B cell (primary cell): ENCODE measurements at regions of chr1 and their contacts with region 1.

Region 1: DNA sequence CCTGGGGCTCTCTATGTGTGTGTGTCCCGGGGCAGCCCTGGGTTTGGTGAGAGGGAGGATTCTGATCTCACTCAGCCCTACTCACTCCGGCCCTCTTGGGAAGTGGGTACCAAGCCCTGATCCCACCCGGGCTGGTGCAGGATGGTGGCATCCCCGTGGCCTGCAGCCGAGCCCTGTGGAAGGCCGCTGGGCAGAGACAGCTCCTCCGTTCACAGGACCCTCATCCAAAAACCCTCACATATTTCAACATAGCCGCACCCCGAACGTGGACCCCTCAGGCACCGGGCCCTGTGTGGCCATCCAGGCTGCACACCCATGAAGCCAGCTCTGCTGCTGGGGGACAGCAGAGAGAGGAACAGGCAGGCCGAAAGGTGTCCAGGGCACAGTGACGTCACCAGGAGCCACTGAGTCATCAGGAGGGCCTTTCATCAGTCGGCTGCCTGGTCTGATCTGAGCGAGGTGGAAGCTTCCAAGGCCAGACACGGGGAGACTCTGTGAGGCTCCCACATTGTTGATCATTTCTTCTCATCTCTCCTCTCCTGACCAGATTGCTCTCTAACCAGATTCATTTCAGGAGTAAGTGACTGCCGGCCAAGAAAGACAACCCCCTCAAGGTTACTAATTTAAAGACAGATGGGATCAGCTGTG is 16.2 kb upstream of the GPR157 start:
- DNase-seq: no peak
- ATAC-seq: no peak
- H3K4me3 ChIP-seq: no peak overlapping the region
- H3K4me3 Mint-ChIP-seq: no peak overlapping the region
- H3K27ac ChIP-seq: no peak overlapping the region
- H3K27ac Mint-ChIP-seq: no peak overlapping the region
- H3K4me1 ChIP-seq: no peaks in the 10 kb centered on the region
- H3K4me1 Mint-ChIP-seq: peaks cover 3% of the 10 kb centered on the region
- H3K27me3 ChIP-seq: no peaks in the 10 kb centered on the region
- H3K27me3 Mint-ChIP-seq: no peaks in the 10 kb centered on the region
- CTCF ChIP-seq: no peak

Region 2: GRCh38 chr1:9181176-9181906 is 36.2 kb after region 1 on chr1:
- CTCF ChIA-PET with region 1: interaction called, 10 read pairs
- POLR2A ChIA-PET with region 1: no interaction called
- intact Hi-C with region 1: no loop called
- DNase-seq: peak; percentile 75
- ATAC-seq: peak; percentile 62
- H3K4me3 ChIP-seq: peak overlapping the region in 4 of 5 experiments; percentile 15 to 50 (median 44)
- H3K4me3 Mint-ChIP-seq: peak overlapping the region; percentile 82
- H3K27ac ChIP-seq: no peak overlapping the region
- H3K27ac Mint-ChIP-seq: no peak overlapping the region
- H3K4me1 ChIP-seq: peaks cover 17 to 25% of the 10 kb centered on the region in 2 donors
- H3K4me1 Mint-ChIP-seq: peaks cover 18% of the 10 kb centered on the region
- H3K27me3 ChIP-seq: peaks cover 0 to 42% (median 12%) of the 10 kb centered on the region in 4 experiments
- H3K27me3 Mint-ChIP-seq: peaks cover 28% of the 10 kb centered on the region
- CTCF ChIP-seq: peak; percentile 95

Region 3: DNA sequence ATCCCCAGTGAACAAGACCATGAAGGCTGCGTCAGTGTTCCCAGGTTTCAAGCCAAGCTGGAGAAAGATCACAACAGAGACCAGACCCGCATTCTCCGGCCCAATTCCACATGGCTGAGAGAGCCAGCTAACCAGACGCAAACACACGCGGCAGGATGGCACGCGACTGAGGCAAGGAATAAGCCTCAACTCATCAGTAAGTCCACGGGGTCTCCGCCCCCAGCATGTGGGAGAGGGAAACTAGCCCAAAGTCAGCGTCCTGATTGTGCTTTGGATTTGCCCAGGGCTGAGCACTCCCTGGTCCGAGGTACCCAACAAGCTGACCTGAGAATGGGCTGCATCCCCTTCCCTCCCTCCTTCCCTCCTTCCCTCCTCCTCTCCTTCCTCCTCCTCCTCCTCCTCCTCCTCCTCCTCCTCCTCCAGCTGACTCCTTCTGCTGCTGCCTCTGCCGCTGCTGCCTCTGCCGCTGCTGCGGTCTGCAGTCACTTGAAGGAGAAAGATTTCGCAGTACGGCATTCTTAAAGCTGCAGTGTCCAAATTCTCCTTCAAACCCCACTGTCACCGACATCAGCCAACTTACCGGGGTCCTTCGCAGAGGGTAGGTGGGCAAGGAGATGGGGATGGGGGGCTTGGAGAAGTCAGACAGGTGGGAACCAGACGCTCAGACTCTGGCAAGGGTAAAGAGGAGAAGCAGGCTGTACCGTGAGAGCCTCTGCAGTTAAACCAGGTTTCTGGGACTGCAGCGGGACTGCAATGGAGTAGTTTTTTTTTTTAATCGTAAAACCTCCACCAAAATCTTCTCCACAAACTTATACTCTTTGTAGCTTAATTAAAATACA is 56.5 kb after region 1 on chr1:
- CTCF ChIA-PET with region 1: interaction called, 46 read pairs
- POLR2A ChIA-PET with region 1: no interaction called
- intact Hi-C with region 1: loop called (anchors 1 kb)
- DNase-seq: no peak
- ATAC-seq: no peak
- H3K4me3 ChIP-seq: no peak overlapping the region
- H3K4me3 Mint-ChIP-seq: peak overlapping the region; percentile 21
- H3K27ac ChIP-seq: no peak overlapping the region
- H3K27ac Mint-ChIP-seq: no peak overlapping the region
- H3K4me1 ChIP-seq: peaks cover 19 to 22% of the 10 kb centered on the region in 2 donors
- H3K4me1 Mint-ChIP-seq: peaks cover 32% of the 10 kb centered on the region
- H3K27me3 ChIP-seq: peaks cover 0 to 77% (median 50%) of the 10 kb centered on the region in 4 experiments
- H3K27me3 Mint-ChIP-seq: peaks cover 72% of the 10 kb centered on the region
- CTCF ChIP-seq: no peak

Region 4: DNA sequence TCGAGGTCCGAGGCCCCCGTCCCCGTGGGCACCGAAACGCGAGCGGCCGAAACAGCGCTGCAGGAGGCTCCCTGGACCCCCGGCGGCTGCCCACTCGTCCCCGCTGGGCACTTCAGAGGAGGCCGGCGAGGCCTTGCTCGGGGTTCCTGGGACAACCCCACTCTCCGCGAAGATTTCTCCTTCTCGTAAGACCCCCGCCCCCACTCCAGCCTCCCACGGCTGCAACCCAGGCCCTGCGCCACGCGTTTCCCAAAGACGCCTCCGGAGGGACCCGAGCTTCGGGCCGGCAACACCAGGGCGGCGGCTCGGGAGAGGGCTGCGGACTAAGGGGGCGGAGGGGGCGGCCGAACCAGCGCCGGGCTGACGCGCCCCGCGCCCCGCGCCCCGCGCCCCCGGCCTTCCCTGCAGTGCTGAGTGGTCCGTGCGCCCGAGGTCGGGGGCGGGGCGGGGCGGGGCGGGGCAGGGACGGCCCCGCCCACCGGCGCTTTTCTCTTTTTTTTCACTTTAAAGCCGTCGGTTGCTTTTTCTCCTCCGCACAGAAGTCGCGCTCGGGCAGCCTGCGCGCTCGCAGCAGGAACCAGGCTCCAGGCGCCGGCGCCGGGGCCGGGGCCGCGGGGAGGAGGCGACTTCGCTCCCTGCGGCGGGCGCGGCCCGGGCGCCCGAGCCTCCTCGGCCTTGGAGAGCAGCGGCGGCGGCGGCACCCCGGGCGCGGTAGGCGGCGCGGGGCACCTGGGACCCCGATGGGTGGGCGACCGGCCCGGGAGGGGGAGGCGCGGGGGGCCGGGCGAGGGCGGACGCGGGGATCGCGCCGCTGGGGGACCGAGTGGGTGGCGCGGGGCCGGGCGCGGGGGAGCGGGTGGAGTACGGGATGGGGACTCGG is 147.5 kb after region 1 on chr1 and contains the start of gene SPSB1:
- CTCF ChIA-PET with region 1: no interaction called
- POLR2A ChIA-PET with region 1: no interaction called
- intact Hi-C with region 1: no loop called
- DNase-seq: peak; percentile 86
- ATAC-seq: peak; percentile 68
- H3K4me3 ChIP-seq: peak within 1 kb of the TSS; percentile 41 to 70 (median 59)
- H3K4me3 Mint-ChIP-seq: peak within 1 kb of the TSS; percentile 64
- H3K27ac ChIP-seq: peak within 1 kb of the TSS in 1 of 2 donors; percentile 47
- H3K27ac Mint-ChIP-seq: peak within 1 kb of the TSS; percentile 72
- H3K4me1 ChIP-seq: peaks cover 6 to 23% of the 10 kb centered on the region in 2 donors
- H3K4me1 Mint-ChIP-seq: peaks cover 7% of the 10 kb centered on the region
- H3K27me3 ChIP-seq: no peaks in the 10 kb centered on the region
- H3K27me3 Mint-ChIP-seq: no peaks in the 10 kb centered on the region
- CTCF ChIP-seq: no peak
- total RNA-seq, gene SPSB1: 8.9 and 9.4 TPM in 2 replicates